ENCODE measurements at regions of chr4 and their contacts with region 1.

Region 1: DNA sequence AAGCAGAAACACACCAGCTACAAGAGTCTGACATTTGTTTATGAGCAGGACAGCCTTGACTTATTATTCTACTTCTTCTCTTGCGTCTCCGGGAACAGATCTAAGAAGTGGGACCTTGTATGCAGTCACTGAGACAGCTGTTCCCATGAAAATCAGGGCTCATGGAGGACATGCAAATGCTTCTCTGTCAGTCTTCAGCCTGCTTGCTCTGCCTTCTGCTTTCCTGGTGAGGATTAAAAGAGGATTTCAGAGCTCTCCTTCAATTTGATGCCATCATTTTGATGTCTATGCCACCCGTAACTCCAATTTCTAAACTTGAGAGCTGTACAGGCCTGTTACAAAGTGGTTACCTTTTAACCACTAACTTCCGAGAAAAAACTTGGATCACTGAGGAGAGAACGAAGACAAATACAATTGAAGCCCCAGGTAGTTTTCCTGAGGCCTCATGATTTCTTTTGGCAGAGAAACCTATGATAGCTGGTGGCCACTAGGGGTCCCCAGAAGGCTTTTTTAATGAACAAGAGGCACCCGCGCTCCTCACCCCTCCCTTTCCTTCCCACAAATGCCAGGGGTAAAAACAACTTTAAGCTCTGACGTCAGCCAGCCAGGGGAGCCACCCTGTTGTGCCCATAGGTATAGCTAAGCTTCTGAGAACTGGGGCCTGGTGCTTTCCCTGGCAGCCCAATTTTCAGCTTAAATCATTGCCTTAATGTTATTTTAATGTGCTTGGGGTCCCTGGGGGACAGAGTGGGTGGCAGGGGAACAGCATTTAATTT is 97.0 kb downstream of the DDIT4L start:
- DNase-seq: peak; percentile 73 to 86
- ATAC-seq: peak; percentile 91 to 95 (median 94)
- H3K4me3 ChIP-seq: no peak overlapping the region
- H3K27ac ChIP-seq: peak overlapping the region; percentile 81
- H3K4me1 ChIP-seq: peaks cover 26% of the 10 kb centered on the region
- H3K27me3 ChIP-seq: no peaks in the 10 kb centered on the region
- CTCF ChIP-seq: peak; percentile 84

Region 2: DNA sequence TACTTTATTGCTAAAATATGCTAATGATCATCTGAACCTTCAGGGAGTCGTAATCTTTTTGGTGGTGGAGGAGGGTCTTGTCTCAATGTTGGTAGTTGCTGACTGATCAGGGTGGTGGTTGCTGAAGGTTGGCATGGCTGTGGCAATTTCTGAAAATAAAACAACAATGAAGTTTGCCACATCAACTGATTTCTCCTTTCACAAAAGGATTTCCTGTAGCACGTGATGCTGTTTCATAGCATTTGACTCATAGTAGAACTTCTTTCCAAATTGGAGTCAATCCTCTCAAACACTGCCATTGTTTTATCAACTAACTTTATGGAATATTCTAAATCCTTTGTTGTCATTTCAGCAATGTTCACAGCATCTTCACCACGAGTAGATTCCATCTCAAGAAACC is 77.7 kb after region 1 on chr4:
- intact Hi-C with region 1: no loop called
- DNase-seq: no peak
- ATAC-seq: no peak
- H3K4me3 ChIP-seq: no peak overlapping the region
- H3K27ac ChIP-seq: no peak overlapping the region
- H3K4me1 ChIP-seq: peaks cover 13% of the 10 kb centered on the region
- H3K27me3 ChIP-seq: no peaks in the 10 kb centered on the region
- CTCF ChIP-seq: no peak

Region 3: DNA sequence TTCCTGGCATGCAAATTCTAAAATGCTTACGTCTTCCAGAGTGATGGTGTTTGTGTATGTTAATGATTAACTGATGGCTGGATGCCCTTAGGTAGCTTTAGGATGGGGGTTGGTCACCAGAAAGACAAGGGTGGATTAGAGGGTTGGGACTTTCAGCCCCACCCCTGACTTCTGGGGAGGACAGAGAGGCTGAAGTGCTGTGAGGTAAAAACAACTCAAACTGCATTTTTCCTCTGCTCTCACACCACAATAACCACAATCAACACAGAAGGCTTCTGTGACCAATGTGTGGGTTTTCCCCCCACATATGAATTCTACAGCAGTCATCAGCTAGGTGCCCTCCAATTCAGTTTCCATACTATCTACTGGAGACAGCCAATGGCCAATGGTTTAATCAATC is 115.7 kb after region 1 on chr4:
- intact Hi-C with region 1: no loop called
- DNase-seq: no peak
- ATAC-seq: no peak
- H3K4me3 ChIP-seq: no peak overlapping the region
- H3K27ac ChIP-seq: no peak overlapping the region
- H3K4me1 ChIP-seq: peaks cover 14% of the 10 kb centered on the region
- H3K27me3 ChIP-seq: no peaks in the 10 kb centered on the region
- CTCF ChIP-seq: no peak

Region 4: DNA sequence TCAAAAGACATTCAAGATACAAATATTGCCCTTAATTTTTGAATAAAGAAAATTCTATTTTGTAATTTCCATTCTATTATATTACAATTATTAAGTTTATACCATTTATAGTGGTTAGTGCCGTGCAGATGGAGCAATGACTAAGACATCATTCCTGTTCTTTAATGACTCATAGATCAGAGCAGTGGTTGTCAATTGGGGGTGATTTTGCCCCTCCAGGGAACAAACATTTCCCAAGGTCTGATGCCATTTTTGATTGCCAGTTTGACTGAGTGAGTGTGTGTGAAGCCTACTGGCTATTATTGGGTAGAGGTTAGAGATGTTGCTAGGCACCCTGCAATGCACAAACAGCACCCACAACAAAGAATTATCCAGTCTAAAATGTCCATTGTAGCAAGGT is 194.9 kb after region 1 on chr4:
- intact Hi-C with region 1: loop called in 1 of 2 experiments (anchors 10 kb)
- DNase-seq: no peak
- ATAC-seq: peak in 3 of 4 donors; percentile 49 to 70 (median 57)
- H3K4me3 ChIP-seq: no peak overlapping the region
- H3K27ac ChIP-seq: peak overlapping the region; percentile 69
- H3K4me1 ChIP-seq: peaks cover 69% of the 10 kb centered on the region
- H3K27me3 ChIP-seq: no peaks in the 10 kb centered on the region
- CTCF ChIP-seq: no peak

Region 5: GRCh38 chr4:100421361-100421978 is 328.2 kb after region 1 on chr4:
- intact Hi-C with region 1: loop called in 1 of 2 experiments (anchors 10 kb)
- DNase-seq: no peak
- ATAC-seq: peak; percentile 64 to 93 (median 80)
- H3K4me3 ChIP-seq: peak overlapping the region; percentile 60
- H3K27ac ChIP-seq: peak overlapping the region; percentile 74
- H3K4me1 ChIP-seq: peaks cover 20% of the 10 kb centered on the region
- H3K27me3 ChIP-seq: no peaks in the 10 kb centered on the region
- CTCF ChIP-seq: peak; percentile 79

Region 6: GRCh38 chr4:100742045-100742444 is 648.8 kb after region 1 on chr4:
- intact Hi-C with region 1: loop called (anchors 2 to 5 kb)
- DNase-seq: no peak
- ATAC-seq: no peak
- H3K4me3 ChIP-seq: no peak overlapping the region
- H3K27ac ChIP-seq: no peak overlapping the region
- H3K4me1 ChIP-seq: no peaks in the 10 kb centered on the region
- H3K27me3 ChIP-seq: no peaks in the 10 kb centered on the region
- CTCF ChIP-seq: peak; percentile 52

Region 7: GRCh38 chr4:101730291-101731117 is 1637.2 kb after region 1 on chr4:
- intact Hi-C with region 1: loop called (anchors 10 kb)
- DNase-seq: peak; percentile 47 to 71
- ATAC-seq: peak; percentile 82 to 97 (median 94)
- H3K4me3 ChIP-seq: no peak overlapping the region
- H3K27ac ChIP-seq: no peak overlapping the region
- H3K4me1 ChIP-seq: no peaks in the 10 kb centered on the region
- H3K27me3 ChIP-seq: no peaks in the 10 kb centered on the region
- CTCF ChIP-seq: peak; percentile 81

Measured in psoas muscle (tissue), 8 donors.